CD8-positive, alpha-beta T cell (primary cell): ENCODE measurements at regions of chr2 and their contacts with region 1.

Region 1: DNA sequence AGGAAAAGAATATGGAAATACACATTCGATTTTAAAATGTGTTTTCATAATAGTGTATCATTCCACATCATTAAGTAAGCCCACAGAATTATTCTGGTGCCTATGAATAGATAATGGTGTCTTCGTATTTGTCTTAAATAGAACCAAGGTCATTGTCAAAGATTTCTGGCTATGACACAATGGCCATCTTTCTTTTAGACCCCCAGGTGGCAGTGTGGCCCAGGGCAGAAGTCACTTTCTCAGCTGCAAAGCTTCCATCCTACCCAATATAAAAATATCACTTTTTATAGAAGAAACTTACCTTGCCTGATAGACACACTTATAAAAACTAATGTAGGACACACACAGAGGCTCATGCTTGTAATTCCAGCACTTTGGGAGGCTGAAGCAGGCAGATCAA is 57.5 kb downstream of the ZRANB3 start:
- DNase-seq: peak in 6 of 9 experiments; percentile 4 to 57 (median 32)
- ATAC-seq: peak; percentile 38
- H3K4me3 ChIP-seq: no peak overlapping the region
- H3K4me3 Mint-ChIP-seq: no peak overlapping the region
- H3K27ac ChIP-seq: no peak overlapping the region
- H3K27ac Mint-ChIP-seq: no peak overlapping the region
- H3K4me1 ChIP-seq: no peaks in the 10 kb centered on the region
- H3K4me1 Mint-ChIP-seq: no peaks in the 10 kb centered on the region
- H3K27me3 ChIP-seq: no peaks in the 10 kb centered on the region
- H3K27me3 Mint-ChIP-seq: no peaks in the 10 kb centered on the region
- CTCF ChIP-seq: peak; percentile 15

Region 2: DNA sequence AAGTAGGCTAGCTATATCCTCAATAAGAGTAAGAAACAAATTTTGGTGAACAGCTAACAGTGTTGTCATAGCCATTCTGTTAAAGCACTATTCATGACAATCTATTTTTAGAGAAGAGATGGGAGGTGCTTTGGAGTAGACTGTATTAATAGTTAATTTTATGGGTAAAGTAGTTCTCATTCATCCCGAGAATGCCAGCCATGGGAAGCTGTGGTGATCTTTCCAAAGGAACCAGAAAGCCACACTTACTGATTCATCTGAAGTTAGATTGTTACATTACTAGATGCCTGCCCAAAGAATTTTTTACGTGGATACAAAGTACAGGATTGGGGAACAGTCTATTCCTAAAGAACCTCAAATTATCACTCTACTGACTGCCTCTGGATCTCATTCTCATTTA is 17.1 kb before region 1 on chr2:
- CTCF ChIA-PET with region 1: interaction called, 12 read pairs
- POLR2A ChIA-PET with region 1: no interaction called
- intact Hi-C with region 1: no loop called
- DNase-seq: no peak
- ATAC-seq: no peak
- H3K4me3 ChIP-seq: no peak overlapping the region
- H3K4me3 Mint-ChIP-seq: no peak overlapping the region
- H3K27ac ChIP-seq: no peak overlapping the region
- H3K27ac Mint-ChIP-seq: no peak overlapping the region
- H3K4me1 ChIP-seq: no peaks in the 10 kb centered on the region
- H3K4me1 Mint-ChIP-seq: no peaks in the 10 kb centered on the region
- H3K27me3 ChIP-seq: no peaks in the 10 kb centered on the region
- H3K27me3 Mint-ChIP-seq: no peaks in the 10 kb centered on the region
- CTCF ChIP-seq: no peak

Region 3: GRCh38 chr2:135494503-135494902 is 20.9 kb after region 1 on chr2:
- CTCF ChIA-PET with region 1: no interaction called
- POLR2A ChIA-PET with region 1: no interaction called
- intact Hi-C with region 1: no loop called
- DNase-seq: no peak
- ATAC-seq: no peak
- H3K4me3 ChIP-seq: no peak overlapping the region
- H3K4me3 Mint-ChIP-seq: no peak overlapping the region
- H3K27ac ChIP-seq: no peak overlapping the region
- H3K27ac Mint-ChIP-seq: no peak overlapping the region
- H3K4me1 ChIP-seq: no peaks in the 10 kb centered on the region
- H3K4me1 Mint-ChIP-seq: no peaks in the 10 kb centered on the region
- H3K27me3 ChIP-seq: no peaks in the 10 kb centered on the region
- H3K27me3 Mint-ChIP-seq: no peaks in the 10 kb centered on the region
- CTCF ChIP-seq: no peak

Region 4: GRCh38 chr2:135600915-135601314 is 127.3 kb after region 1 on chr2:
- CTCF ChIA-PET with region 1: interaction called, 5 read pairs
- POLR2A ChIA-PET with region 1: no interaction called
- intact Hi-C with region 1: loop called (anchors 1 kb)
- DNase-seq: peak in 2 of 9 experiments; percentile 18 to 37
- ATAC-seq: no peak
- H3K4me3 ChIP-seq: no peak overlapping the region
- H3K4me3 Mint-ChIP-seq: no peak overlapping the region
- H3K27ac ChIP-seq: no peak overlapping the region
- H3K27ac Mint-ChIP-seq: no peak overlapping the region
- H3K4me1 ChIP-seq: no peaks in the 10 kb centered on the region
- H3K4me1 Mint-ChIP-seq: peaks cover 11% of the 10 kb centered on the region
- H3K27me3 ChIP-seq: no peaks in the 10 kb centered on the region
- H3K27me3 Mint-ChIP-seq: no peaks in the 10 kb centered on the region
- CTCF ChIP-seq: peak; percentile 46